ENCODE measurements at regions of chr2 and their contacts with region 1.

Region 1: GRCh38 chr2:197152451-197153228 is 157.9 kb downstream of the ANKRD44 start:
- DNase-seq: peak; percentile 26
- H3K4me3 Mint-ChIP-seq: peak overlapping the region; percentile 47
- H3K27ac Mint-ChIP-seq: peak overlapping the region; percentile 60
- H3K4me1 Mint-ChIP-seq: peaks cover 80% of the 10 kb centered on the region
- H3K27me3 Mint-ChIP-seq: no peaks in the 10 kb centered on the region

Region 2: GRCh38 chr2:197097578-197098366 is 54.9 kb before region 1 on chr2:
- CTCF ChIA-PET with region 1: no interaction called
- intact Hi-C with region 1: no loop called
- DNase-seq: no peak
- H3K4me3 Mint-ChIP-seq: no peak overlapping the region
- H3K27ac Mint-ChIP-seq: no peak overlapping the region
- H3K4me1 Mint-ChIP-seq: peaks cover 12% of the 10 kb centered on the region
- H3K27me3 Mint-ChIP-seq: no peaks in the 10 kb centered on the region

Region 3: GRCh38 chr2:197121255-197121654 is 31.4 kb before region 1 on chr2:
- CTCF ChIA-PET with region 1: no interaction called
- intact Hi-C with region 1: loop called (anchors 2 kb)
- DNase-seq: peak; percentile 14
- H3K4me3 Mint-ChIP-seq: no peak overlapping the region
- H3K27ac Mint-ChIP-seq: peak overlapping the region; percentile 32
- H3K4me1 Mint-ChIP-seq: peaks cover 47% of the 10 kb centered on the region
- H3K27me3 Mint-ChIP-seq: no peaks in the 10 kb centered on the region

Region 4: DNA sequence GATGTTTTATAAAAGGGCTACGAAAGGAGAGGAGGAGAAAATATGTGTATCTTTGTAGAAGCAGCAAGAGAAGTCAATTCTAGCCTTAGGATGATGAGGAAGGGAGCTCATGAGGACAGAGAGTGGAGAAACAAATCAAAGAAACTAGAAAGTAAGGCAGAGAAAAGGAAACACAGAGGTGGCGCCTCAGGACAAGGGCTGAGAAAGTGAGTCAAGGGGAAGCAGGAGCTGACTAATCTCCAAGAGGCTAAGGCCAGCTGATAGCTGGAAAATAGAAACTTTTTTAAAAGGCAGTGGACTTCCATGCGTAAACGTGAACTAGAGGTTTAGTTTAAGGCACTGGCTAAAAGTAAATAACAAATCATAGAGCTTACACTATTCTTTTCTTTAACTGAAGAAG is 15.4 kb before region 1 on chr2:
- CTCF ChIA-PET with region 1: interaction called, 10 read pairs
- intact Hi-C with region 1: no loop called
- DNase-seq: peak; percentile 55
- H3K4me3 Mint-ChIP-seq: no peak overlapping the region
- H3K27ac Mint-ChIP-seq: peak overlapping the region; percentile 73
- H3K4me1 Mint-ChIP-seq: peaks cover 85% of the 10 kb centered on the region
- H3K27me3 Mint-ChIP-seq: no peaks in the 10 kb centered on the region

Measured in activated naive CD4-positive, alpha-beta T cell treated with anti-CD3 and anti-CD28 coated beads for 36 hours (primary cell).